ENCODE measurements at regions of chr5 and their contacts with region 1.

Region 1: DNA sequence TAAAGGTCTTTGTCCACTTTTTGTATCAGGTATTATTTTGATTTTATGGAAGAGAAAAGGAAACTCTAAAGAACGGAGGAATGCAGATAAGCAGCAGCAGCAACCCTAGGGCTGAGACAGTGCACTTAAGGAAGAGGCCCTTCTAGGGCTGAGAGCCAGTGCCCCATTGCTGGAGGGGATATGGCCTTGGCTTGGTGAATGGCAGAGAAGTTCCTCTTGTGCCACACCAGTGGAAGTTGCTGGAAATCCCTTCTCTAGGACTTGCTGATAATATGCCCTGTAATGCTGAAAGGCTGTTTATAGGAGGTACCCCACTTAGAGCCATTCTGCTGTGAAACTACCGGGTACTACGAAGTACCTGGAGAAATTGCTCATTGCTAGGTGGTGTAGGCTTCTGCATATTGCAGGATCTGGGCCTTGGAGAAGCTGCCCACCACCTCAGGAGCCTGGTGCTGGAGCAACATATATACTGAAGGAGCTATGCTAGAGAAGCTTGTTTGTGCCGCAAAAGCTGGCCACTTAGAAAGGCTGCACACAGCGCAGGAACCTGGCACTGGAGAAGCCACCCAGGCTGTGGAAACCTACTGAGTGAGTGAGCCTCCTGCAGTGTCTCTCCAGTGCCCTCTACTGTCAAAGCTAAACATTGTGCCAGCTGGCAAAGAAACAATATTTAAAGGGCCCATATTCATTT is 9.6 kb upstream of the UBTD2 start:
- DNase-seq: peak; percentile 28 to 83 (median 50)
- ATAC-seq: peak; percentile 100
- H3K4me3 ChIP-seq: no peak overlapping the region
- H3K4me3 Mint-ChIP-seq: no peak overlapping the region
- H3K27ac ChIP-seq: no peak overlapping the region
- H3K27ac Mint-ChIP-seq: no peak overlapping the region
- H3K4me1 ChIP-seq: peaks cover 6% of the 10 kb centered on the region
- H3K4me1 Mint-ChIP-seq: peaks cover 4% of the 10 kb centered on the region
- H3K27me3 ChIP-seq: no peaks in the 10 kb centered on the region
- H3K27me3 Mint-ChIP-seq: no peaks in the 10 kb centered on the region
- CTCF ChIP-seq: peak; percentile 83

Region 2: DNA sequence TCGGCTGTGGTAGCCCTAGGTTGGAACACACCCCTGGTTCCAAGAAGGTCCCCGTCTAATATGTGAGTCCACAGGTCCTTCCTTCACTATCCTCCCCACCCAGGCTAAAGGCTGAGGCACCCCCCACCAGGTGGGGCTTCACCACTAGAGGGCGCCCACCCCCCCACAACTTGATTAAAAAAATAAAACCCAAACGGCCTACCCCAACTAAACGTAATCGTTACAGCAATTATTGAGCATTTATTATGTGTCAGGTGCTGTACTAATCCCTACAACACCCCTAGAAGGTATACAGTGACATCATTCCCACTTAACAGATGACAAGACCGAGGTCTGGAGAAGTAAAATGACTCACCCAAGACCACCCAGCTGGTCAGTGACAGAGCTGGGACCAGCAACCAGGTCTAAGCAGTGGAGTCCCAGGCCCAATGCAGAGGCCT is 808.7 kb before region 1 on chr5:
- CTCF ChIA-PET with region 1: no interaction called
- POLR2A ChIA-PET with region 1: no interaction called
- intact Hi-C with region 1: loop called (anchors 2 to 5 kb)
- DNase-seq: peak; percentile 13 to 62 (median 36)
- ATAC-seq: peak; percentile 51
- H3K4me3 ChIP-seq: no peak overlapping the region
- H3K4me3 Mint-ChIP-seq: no peak overlapping the region
- H3K27ac ChIP-seq: no peak overlapping the region
- H3K27ac Mint-ChIP-seq: no peak overlapping the region
- H3K4me1 ChIP-seq: peaks cover 4% of the 10 kb centered on the region
- H3K4me1 Mint-ChIP-seq: peaks cover 5% of the 10 kb centered on the region
- H3K27me3 ChIP-seq: no peaks in the 10 kb centered on the region
- H3K27me3 Mint-ChIP-seq: peaks cover 7% of the 10 kb centered on the region
- CTCF ChIP-seq: peak; percentile 71

Region 3: GRCh38 chr5:171913987-171914273 is 379.3 kb before region 1 on chr5:
- CTCF ChIA-PET with region 1: interaction called, 6 read pairs
- POLR2A ChIA-PET with region 1: interaction called, 3 read pairs
- intact Hi-C with region 1: loop called (anchors 1 to 2 kb)
- DNase-seq: no peak
- ATAC-seq: no peak
- H3K4me3 ChIP-seq: no peak overlapping the region
- H3K4me3 Mint-ChIP-seq: no peak overlapping the region
- H3K27ac ChIP-seq: no peak overlapping the region
- H3K27ac Mint-ChIP-seq: peak overlapping the region; percentile 9
- H3K4me1 ChIP-seq: no peaks in the 10 kb centered on the region
- H3K4me1 Mint-ChIP-seq: peaks cover 45% of the 10 kb centered on the region
- H3K27me3 ChIP-seq: no peaks in the 10 kb centered on the region
- H3K27me3 Mint-ChIP-seq: no peaks in the 10 kb centered on the region
- CTCF ChIP-seq: no peak

Region 4: GRCh38 chr5:172106511-172107356 is 186.5 kb before region 1 on chr5:
- CTCF ChIA-PET with region 1: interaction called, 13 read pairs
- POLR2A ChIA-PET with region 1: no interaction called
- intact Hi-C with region 1: loop called (anchors 2 kb)
- DNase-seq: peak; percentile 52 to 82 (median 66)
- ATAC-seq: peak; percentile 22
- H3K4me3 ChIP-seq: no peak overlapping the region
- H3K4me3 Mint-ChIP-seq: peak overlapping the region; percentile 42
- H3K27ac ChIP-seq: peak overlapping the region in 1 of 2 donors; percentile 5
- H3K27ac Mint-ChIP-seq: peak overlapping the region; percentile 81
- H3K4me1 ChIP-seq: peaks cover 49% of the 10 kb centered on the region
- H3K4me1 Mint-ChIP-seq: peaks cover 46% of the 10 kb centered on the region
- H3K27me3 ChIP-seq: no peaks in the 10 kb centered on the region
- H3K27me3 Mint-ChIP-seq: no peaks in the 10 kb centered on the region
- CTCF ChIP-seq: peak; percentile 98

Measured in CD4-positive, alpha-beta T cell (primary cell).